Endothelial cell of umbilical vein (primary cell): ENCODE measurements at regions of chr3 and their contacts with region 1.

Region 1: DNA sequence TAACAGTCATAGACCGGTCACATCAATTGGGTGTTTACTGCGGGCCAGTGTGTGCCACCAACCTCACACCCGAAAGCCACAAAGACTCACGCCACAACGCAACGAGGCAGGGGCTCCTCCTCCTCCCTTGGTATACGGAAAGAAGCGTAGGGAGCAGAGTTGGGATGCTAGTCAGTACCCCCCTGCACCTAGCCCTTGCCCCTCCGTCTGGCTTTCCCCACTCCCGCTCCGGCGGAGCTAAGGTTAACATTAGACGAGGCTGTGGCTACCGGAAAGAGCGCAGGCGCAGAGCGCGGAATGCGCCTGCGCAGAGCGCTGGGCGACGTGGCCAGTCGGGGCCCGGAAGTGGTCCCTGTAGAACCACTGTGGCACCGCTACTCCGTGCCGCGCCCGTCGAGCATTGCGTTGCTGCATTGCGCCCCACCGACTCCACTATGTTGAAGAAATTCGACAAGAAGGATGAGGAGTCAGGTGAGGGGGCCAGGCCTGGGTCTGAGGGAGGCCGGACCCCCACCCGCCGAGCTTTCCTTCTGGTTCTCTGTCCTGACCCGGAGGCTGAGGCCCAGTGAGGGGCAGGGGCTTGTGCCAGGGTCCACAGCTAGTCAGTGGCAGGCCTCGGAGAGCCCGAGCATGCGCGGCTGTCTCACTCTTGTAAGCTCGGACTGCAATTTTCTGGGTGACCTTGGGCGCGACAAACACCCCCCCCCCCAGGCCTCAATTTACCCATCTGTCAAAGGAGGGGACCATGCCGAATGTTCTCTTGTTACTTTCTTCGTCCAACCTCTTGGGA is at the start of gene COPG1:
- DNase-seq: peak; percentile 94
- H3K4me3 ChIP-seq: peak within 1 kb of the TSS; percentile 57 to 84 (median 83)
- H3K27ac ChIP-seq: peak within 1 kb of the TSS; percentile 67
- H3K4me1 ChIP-seq: peaks cover 17% of the 10 kb centered on the region
- H3K27me3 ChIP-seq: no peaks in the 10 kb centered on the region
- CTCF ChIP-seq: no peak
- POLR2A ChIP-seq: peak; percentile 98
- total RNA-seq, gene COPG1: 202 and 203 TPM in 2 replicates

Region 2: DNA sequence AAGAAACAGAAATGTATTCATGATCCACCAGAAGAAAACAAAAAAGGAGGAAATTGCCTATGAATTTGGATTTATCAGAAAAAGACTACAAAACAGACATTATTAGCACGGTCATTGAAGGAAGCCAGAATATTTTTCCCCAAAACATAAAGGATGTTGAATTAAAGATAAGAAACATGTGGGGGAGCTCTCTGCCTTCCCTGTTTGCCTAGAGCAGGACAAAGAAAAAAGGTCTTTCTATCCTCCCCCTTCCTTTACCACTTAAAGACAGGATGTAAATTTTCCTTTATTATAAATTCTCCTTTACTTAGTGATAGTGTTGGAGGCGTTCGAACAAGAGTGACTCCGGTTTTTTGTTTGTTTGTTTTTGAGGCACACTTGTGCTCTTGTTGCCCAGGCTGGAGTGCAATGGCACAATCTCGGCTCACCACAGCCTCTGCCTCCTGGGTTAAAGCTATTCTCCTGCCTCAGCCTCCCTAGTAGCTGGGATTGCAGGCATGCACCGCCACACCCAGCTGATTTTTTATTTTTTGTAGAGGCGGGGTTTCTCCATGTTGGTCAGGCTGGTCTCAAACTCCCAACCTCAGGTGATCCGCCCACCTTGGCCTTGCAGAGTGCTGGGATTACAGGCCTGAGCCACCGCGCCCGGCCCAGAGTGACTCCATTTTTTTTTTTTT is 584.0 kb before region 1 on chr3:
- CTCF ChIA-PET with region 1: no interaction called
- POLR2A ChIA-PET with region 1: no interaction called
- dilution Hi-C with region 1: no loop called
- intact Hi-C with region 1: no loop called
- DNase-seq: peak; percentile 50
- H3K4me3 ChIP-seq: no peak overlapping the region
- H3K27ac ChIP-seq: no peak overlapping the region
- H3K4me1 ChIP-seq: peaks cover 3% of the 10 kb centered on the region
- H3K27me3 ChIP-seq: peaks cover 5 to 9% of the 10 kb centered on the region in 2 experiments
- CTCF ChIP-seq: peak in 1 of 2 donors; percentile 7
- POLR2A ChIP-seq: no peak

Region 3: DNA sequence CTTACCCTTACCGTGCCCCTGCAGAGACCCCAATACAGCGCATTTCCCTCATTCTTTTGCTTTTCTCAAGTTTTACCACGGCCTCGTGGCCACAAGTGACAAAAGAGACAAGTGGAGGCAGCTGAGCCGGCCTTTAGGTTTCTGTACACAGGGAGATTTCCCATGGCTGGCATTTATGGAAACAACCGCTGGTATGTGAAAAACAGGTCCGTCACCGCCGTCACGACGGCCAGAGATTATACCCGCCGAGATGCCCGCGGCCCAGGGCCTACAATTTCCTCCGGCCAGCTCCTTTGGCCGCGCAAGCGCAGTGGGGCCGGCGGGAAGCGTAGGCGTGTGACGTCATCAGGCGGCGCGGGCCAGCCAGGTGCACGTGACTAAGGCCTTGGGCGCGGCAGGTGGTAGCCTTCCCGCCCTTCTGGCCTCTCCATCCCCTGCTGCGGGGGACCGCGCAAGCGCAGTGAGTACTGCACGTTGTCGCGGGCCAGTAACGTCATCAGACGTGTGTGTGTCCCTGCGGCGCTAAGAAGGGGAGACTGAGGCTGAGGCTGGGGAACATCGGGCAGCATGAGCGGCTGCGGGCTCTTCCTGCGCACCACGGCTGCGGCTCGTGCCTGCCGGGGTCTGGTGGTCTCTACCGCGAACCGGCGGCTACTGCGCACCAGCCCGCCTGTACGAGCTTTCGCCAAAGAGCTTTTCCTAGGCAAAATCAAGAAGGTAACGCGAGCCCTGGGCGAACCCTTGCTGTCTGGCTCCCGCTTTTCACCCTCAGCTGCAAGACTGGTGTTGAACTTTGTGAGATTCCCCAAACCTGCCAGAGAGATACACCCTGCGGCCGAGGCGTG is 370.1 kb before region 1 on chr3 and contains the start of gene ACAD9:
- CTCF ChIA-PET with region 1: interaction called, 3 read pairs
- POLR2A ChIA-PET with region 1: interaction called, 3 read pairs
- dilution Hi-C with region 1: no loop called
- intact Hi-C with region 1: loop called (anchors 2 kb)
- DNase-seq: peak; percentile 99
- H3K4me3 ChIP-seq: peak within 1 kb of the TSS; percentile 81 to 91 (median 90)
- H3K27ac ChIP-seq: peak within 1 kb of the TSS; percentile 95
- H3K4me1 ChIP-seq: peaks cover 23% of the 10 kb centered on the region
- H3K27me3 ChIP-seq: peaks cover 3 to 6% of the 10 kb centered on the region in 2 experiments
- CTCF ChIP-seq: no peak
- POLR2A ChIP-seq: peak; percentile 97
- total RNA-seq, gene ACAD9: 56.0 and 65.8 TPM in 2 replicates

Region 4: GRCh38 chr3:129034648-129035047 is 214.8 kb before region 1 on chr3:
- CTCF ChIA-PET with region 1: no interaction called
- POLR2A ChIA-PET with region 1: no interaction called
- dilution Hi-C with region 1: no loop called
- intact Hi-C with region 1: no loop called
- DNase-seq: no peak
- H3K4me3 ChIP-seq: no peak overlapping the region
- H3K27ac ChIP-seq: no peak overlapping the region
- H3K4me1 ChIP-seq: no peaks in the 10 kb centered on the region
- H3K27me3 ChIP-seq: no peaks in the 10 kb centered on the region
- CTCF ChIP-seq: no peak
- POLR2A ChIP-seq: no peak

Region 5: GRCh38 chr3:129052675-129053074 is 196.8 kb before region 1 on chr3:
- CTCF ChIA-PET with region 1: interaction called, 39 read pairs
- POLR2A ChIA-PET with region 1: interaction called, 5 read pairs
- dilution Hi-C with region 1: no loop called
- intact Hi-C with region 1: loop called (anchors 1 kb)
- DNase-seq: peak; percentile 73
- H3K4me3 ChIP-seq: no peak overlapping the region
- H3K27ac ChIP-seq: no peak overlapping the region
- H3K4me1 ChIP-seq: peaks cover 15% of the 10 kb centered on the region
- H3K27me3 ChIP-seq: no peaks in the 10 kb centered on the region
- CTCF ChIP-seq: no peak
- POLR2A ChIP-seq: no peak

Region 6: GRCh38 chr3:129160891-129161859 is 88.3 kb before region 1 on chr3 and contains the start of gene ISY1:
- CTCF ChIA-PET with region 1: interaction called, 95 read pairs
- POLR2A ChIA-PET with region 1: interaction called, 5 read pairs
- dilution Hi-C with region 1: no loop called
- intact Hi-C with region 1: loop called (anchors 1 kb)
- DNase-seq: peak; percentile 95
- H3K4me3 ChIP-seq: peak within 1 kb of the TSS; percentile 82 to 100 (median 99)
- H3K27ac ChIP-seq: peak within 1 kb of the TSS; percentile 86
- H3K4me1 ChIP-seq: peaks cover 19% of the 10 kb centered on the region
- H3K27me3 ChIP-seq: no peaks in the 10 kb centered on the region
- CTCF ChIP-seq: peak; percentile 88 to 93
- POLR2A ChIP-seq: peak; percentile 99
- total RNA-seq, gene ISY1: 50.6 and 59.4 TPM in 2 replicates

Region 7: GRCh38 chr3:129195731-129196256 is 53.7 kb before region 1 on chr3:
- CTCF ChIA-PET with region 1: interaction called, 38 read pairs
- POLR2A ChIA-PET with region 1: no interaction called
- dilution Hi-C with region 1: no loop called
- intact Hi-C with region 1: loop called (anchors 1 kb)
- DNase-seq: peak; percentile 82
- H3K4me3 ChIP-seq: peak overlapping the region in 1 of 3 experiments; percentile 23
- H3K27ac ChIP-seq: peak overlapping the region; percentile 81
- H3K4me1 ChIP-seq: peaks cover 26% of the 10 kb centered on the region
- H3K27me3 ChIP-seq: no peaks in the 10 kb centered on the region
- CTCF ChIP-seq: no peak
- POLR2A ChIP-seq: no peak

Region 8: DNA sequence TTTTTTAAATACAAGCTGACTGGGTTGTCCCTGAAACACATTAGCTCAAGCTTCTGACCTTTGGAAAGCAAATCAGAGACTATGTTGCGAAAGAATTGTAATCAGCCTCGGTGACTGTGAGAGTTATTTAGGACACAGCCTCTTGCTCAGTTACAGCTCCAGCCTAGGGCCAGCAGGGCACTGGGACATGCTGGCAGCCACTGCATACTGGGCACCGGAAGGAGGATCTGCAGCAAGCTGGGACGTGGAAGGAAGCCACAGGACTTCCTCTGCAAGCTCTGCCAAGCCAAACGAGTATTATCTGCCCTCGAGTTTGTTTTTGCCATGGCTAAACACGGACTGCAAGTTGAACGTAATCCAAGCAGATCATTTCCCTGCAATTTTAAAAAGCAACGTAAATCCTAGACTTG is 24.5 kb before region 1 on chr3:
- CTCF ChIA-PET with region 1: interaction called, 15 read pairs
- POLR2A ChIA-PET with region 1: no interaction called
- dilution Hi-C with region 1: no loop called
- intact Hi-C with region 1: loop called (anchors 1 kb)
- DNase-seq: peak; percentile 71
- H3K4me3 ChIP-seq: peak overlapping the region in 1 of 3 experiments; percentile 16
- H3K27ac ChIP-seq: peak overlapping the region; percentile 9
- H3K4me1 ChIP-seq: peaks cover 45% of the 10 kb centered on the region
- H3K27me3 ChIP-seq: no peaks in the 10 kb centered on the region
- CTCF ChIP-seq: no peak
- POLR2A ChIP-seq: no peak

Region 9: DNA sequence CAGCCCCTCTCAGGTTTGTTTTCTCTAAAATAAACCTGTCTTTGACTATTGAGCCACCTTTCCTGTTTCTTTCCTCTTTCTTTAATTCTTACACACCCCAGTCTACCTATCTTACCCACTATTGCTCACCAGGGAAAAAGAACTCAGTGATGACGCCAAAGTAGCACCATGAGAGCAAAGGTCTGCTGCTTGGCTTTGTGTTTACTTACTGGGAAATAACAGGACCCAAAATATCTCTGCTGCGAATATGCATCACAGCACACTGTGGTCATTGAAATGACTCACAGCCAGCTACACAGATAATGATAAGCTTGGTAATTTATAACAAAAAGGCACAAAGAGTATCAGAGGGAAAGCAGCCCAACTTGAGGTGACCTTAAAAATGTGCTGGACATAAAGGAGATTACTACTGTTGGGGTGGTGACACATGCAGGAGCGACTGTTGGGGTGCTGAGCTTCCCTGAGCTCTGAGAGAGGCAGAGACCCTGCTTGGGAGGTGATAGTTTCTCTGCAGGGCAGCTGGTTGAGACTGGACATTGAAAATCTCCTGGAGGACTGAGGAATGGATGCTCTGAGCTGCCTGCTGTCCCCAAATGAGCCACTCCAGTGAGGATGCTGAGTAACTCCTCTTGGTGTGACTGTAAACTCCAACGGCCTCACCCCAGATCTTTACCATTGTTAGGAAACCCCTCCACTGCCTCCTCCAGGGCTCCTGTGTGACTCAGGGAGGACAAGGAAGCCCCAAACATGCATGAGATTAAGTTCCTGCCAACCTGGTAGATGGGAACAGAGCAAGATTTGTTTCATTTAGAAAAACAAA is 164.4 kb after region 1 on chr3:
- CTCF ChIA-PET with region 1: no interaction called
- POLR2A ChIA-PET with region 1: no interaction called
- dilution Hi-C with region 1: no loop called
- intact Hi-C with region 1: no loop called
- DNase-seq: peak; percentile 71
- H3K4me3 ChIP-seq: no peak overlapping the region
- H3K27ac ChIP-seq: no peak overlapping the region
- H3K4me1 ChIP-seq: peaks cover 8% of the 10 kb centered on the region
- H3K27me3 ChIP-seq: no peaks in the 10 kb centered on the region
- CTCF ChIP-seq: no peak
- POLR2A ChIP-seq: no peak